ENCODE measurements at regions of chr12 and their contacts with region 1.

Region 1: DNA sequence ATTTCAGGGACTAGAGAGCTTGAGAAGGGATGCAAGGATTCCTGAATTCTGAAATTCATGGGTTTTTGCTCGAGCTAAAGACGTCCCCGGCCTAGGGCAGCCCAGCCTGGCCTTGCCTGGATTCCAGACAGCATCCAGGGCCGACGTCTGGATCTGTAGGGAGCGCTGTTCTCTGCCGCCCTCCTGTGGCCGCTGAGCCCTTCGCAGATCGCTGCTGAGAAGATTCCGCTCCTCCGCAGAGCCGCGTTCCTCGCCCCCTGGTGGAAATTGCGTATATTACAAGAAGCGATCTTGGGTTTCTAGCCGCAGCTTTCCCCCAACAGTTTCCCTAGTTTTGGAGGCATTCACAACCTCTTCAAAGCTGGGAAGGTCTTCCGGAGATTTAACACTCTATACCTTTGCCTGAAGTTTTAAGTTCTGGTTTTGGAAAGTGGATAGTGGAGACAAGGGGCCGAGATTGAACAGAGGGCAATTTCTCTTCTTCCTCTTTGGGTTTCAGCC is 5.1 kb downstream of the CISTR start:
- DNase-seq: peak; percentile 80 to 94 (median 84)
- ATAC-seq: peak; percentile 85
- H3K4me3 ChIP-seq: no peak overlapping the region
- H3K4me3 Mint-ChIP-seq: peak overlapping the region; percentile 57
- H3K27ac ChIP-seq: no peak overlapping the region
- H3K27ac Mint-ChIP-seq: no peak overlapping the region
- H3K4me1 ChIP-seq: peaks cover 41% of the 10 kb centered on the region
- H3K4me1 Mint-ChIP-seq: peaks cover 5% of the 10 kb centered on the region
- H3K27me3 ChIP-seq: peaks cover 55 to 65% of the 10 kb centered on the region in 2 experiments
- H3K27me3 Mint-ChIP-seq: no peaks in the 10 kb centered on the region
- CTCF ChIP-seq: peak; percentile 100

Region 2: DNA sequence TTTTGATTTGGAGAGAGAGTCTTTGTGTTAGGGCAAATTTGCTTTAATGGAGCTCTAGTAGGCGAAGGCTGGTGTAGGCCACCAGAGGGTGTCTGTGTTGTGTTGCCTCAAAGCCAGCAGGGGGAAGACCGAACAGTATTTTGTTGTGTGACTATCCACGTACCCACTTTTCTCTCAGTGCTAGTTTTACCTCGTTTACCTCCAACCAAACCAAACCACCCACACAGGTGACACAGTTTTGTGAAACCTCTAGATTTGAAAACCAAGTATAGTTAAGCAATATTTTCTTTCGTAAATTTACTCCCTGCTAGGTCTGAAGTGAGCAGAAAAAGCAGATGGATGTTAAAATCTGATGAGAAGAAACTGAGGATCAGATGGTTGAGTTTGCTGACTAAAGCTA is 203.1 kb before region 1 on chr12:
- CTCF ChIA-PET with region 1: interaction called, 5 read pairs
- POLR2A ChIA-PET with region 1: interaction called, 3 read pairs
- intact Hi-C with region 1: loop called (anchors 5 kb)
- DNase-seq: peak; percentile 12 to 77 (median 40)
- ATAC-seq: peak; percentile 98
- H3K4me3 ChIP-seq: no peak overlapping the region
- H3K4me3 Mint-ChIP-seq: no peak overlapping the region
- H3K27ac ChIP-seq: no peak overlapping the region
- H3K27ac Mint-ChIP-seq: peak overlapping the region; percentile 68
- H3K4me1 ChIP-seq: peaks cover 3% of the 10 kb centered on the region
- H3K4me1 Mint-ChIP-seq: peaks cover 19% of the 10 kb centered on the region
- H3K27me3 ChIP-seq: no peaks in the 10 kb centered on the region
- H3K27me3 Mint-ChIP-seq: no peaks in the 10 kb centered on the region
- CTCF ChIP-seq: peak; percentile 76

Region 3: DNA sequence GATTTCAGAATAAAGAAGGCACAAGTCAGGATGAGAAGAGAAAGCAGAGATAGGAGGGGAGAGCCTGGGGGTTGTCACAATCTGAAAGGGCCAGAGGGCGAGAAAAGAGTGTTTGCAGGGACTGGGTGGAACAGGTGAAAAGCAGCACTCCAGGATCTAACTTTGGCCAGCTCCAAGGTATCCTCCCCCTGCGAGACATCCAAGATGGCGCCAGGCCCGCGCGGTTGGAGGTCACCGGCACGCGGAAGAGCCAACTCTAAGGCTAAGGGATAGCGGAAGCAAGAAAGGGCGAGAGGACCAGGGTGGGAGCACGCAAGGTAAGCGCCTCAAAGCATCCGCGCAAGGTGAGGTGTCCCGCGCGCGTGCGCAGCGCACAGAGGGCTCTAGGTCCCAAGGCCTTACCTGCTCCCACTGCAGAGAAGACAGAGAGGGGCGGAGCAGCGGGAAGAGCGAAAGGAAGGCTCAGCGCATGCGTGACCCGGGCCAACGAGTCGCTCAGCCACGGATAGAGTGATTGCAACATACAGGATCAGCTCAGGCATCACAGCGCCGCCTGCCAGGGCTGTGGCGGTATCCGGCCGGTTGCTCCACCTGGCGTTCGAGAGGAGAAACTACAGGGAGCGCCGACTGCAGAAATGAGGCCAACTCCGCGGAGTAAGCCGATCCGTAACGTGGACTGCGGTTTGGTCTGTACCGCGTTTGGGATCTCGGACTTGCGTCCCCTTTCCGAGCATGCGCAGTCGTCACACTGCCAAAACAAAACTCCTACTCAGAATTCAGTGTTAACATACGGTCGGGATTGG is 70.8 kb before region 1 on chr12 and contains the start of gene ATP5MC2:
- CTCF ChIA-PET with region 1: interaction called, 12 read pairs
- POLR2A ChIA-PET with region 1: interaction called, 4 read pairs
- intact Hi-C with region 1: no loop called
- DNase-seq: peak; percentile 95 to 100 (median 96)
- ATAC-seq: peak; percentile 92
- H3K4me3 ChIP-seq: peak within 1 kb of the TSS; percentile 78
- H3K4me3 Mint-ChIP-seq: peak within 1 kb of the TSS; percentile 93
- H3K27ac ChIP-seq: peak within 1 kb of the TSS; percentile 58 to 66
- H3K27ac Mint-ChIP-seq: peak within 1 kb of the TSS; percentile 90
- H3K4me1 ChIP-seq: peaks cover 31% of the 10 kb centered on the region
- H3K4me1 Mint-ChIP-seq: peaks cover 32% of the 10 kb centered on the region
- H3K27me3 ChIP-seq: peaks cover 10 to 18% of the 10 kb centered on the region in 2 experiments
- H3K27me3 Mint-ChIP-seq: peaks cover 17% of the 10 kb centered on the region
- CTCF ChIP-seq: peak; percentile 99
- total RNA-seq, gene ATP5MC2: 235 to 245 TPM

Region 4: GRCh38 chr12:53727310-53728041 is 19.2 kb before region 1 on chr12 and contains the start of gene CALCOCO1:
- CTCF ChIA-PET with region 1: interaction called, 57 read pairs
- POLR2A ChIA-PET with region 1: interaction called, 11 read pairs
- intact Hi-C with region 1: loop called (anchors 1 to 2 kb)
- DNase-seq: peak; percentile 89 to 99 (median 96)
- ATAC-seq: peak; percentile 98
- H3K4me3 ChIP-seq: peak within 1 kb of the TSS; percentile 73
- H3K4me3 Mint-ChIP-seq: peak within 1 kb of the TSS; percentile 92
- H3K27ac ChIP-seq: peak within 1 kb of the TSS; percentile 42 to 52
- H3K27ac Mint-ChIP-seq: peak within 1 kb of the TSS; percentile 82
- H3K4me1 ChIP-seq: peaks cover 27% of the 10 kb centered on the region
- H3K4me1 Mint-ChIP-seq: peaks cover 34% of the 10 kb centered on the region
- H3K27me3 ChIP-seq: no peaks in the 10 kb centered on the region
- H3K27me3 Mint-ChIP-seq: no peaks in the 10 kb centered on the region
- CTCF ChIP-seq: no peak
- total RNA-seq, gene CALCOCO1: 66.8 to 69.3 TPM

Region 5: GRCh38 chr12:53757095-53757770 is 10.6 kb after region 1 on chr12:
- CTCF ChIA-PET with region 1: interaction called, 46 read pairs
- POLR2A ChIA-PET with region 1: interaction called, 6 read pairs
- intact Hi-C with region 1: no loop called
- DNase-seq: peak; percentile 63 to 87 (median 74)
- ATAC-seq: peak; percentile 95
- H3K4me3 ChIP-seq: no peak overlapping the region
- H3K4me3 Mint-ChIP-seq: peak overlapping the region; percentile 13
- H3K27ac ChIP-seq: no peak overlapping the region
- H3K27ac Mint-ChIP-seq: no peak overlapping the region
- H3K4me1 ChIP-seq: peaks cover 14% of the 10 kb centered on the region
- H3K4me1 Mint-ChIP-seq: peaks cover 23% of the 10 kb centered on the region
- H3K27me3 ChIP-seq: peaks cover 50 to 52% of the 10 kb centered on the region in 2 experiments
- H3K27me3 Mint-ChIP-seq: peaks cover 46% of the 10 kb centered on the region
- CTCF ChIP-seq: peak; percentile 91